ENCODE measurements at regions of chr4 and their contacts with region 1.

Region 1: GRCh38 chr4:95190751-95191436 is 357.9 kb downstream of the UNC5C start:
- DNase-seq: no peak
- H3K4me3 ChIP-seq: no peak overlapping the region
- H3K27ac ChIP-seq: no peak overlapping the region
- H3K4me1 ChIP-seq: peaks cover 7% of the 10 kb centered on the region
- H3K27me3 ChIP-seq: no peaks in the 10 kb centered on the region
- CTCF ChIP-seq: no peak
- EP300 ChIP-seq: no peak
- POLR2A ChIP-seq: no peak

Region 2: DNA sequence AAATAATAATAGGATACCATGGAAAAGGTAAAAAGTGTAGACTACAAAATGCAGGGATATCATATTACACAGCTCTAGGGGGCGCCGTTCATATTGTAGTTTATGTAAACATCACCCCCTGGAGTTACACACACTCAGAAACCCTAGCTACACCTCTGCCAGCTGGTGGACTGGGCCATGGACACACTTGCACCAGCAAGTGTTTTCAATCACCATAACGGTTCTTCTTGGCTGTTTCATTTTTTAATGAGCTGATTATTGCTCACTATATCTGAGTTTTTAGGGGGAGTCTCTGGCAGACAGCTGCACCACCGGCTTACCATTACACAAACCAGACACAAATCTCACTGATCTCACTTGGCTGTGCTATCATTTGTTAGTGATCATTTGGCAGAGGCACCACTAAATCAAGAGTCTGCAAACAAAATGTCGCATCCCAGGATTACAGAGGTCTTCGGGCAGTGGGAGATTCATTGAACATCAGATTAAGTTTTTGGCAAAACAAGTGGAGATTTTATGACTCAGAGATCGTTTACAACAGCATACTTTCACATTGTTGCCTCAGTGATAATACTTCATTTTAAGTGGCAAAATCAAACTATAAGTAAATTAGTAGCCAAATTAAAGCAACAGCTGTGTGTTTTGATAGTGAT is 172.1 kb after region 1 on chr4:
- intact Hi-C with region 1: loop called in 1 of 4 experiments (anchors 5 kb)
- DNase-seq: peak; percentile 20 to 56 (median 39)
- H3K4me3 ChIP-seq: no peak overlapping the region
- H3K27ac ChIP-seq: no peak overlapping the region
- H3K4me1 ChIP-seq: peaks cover 3% of the 10 kb centered on the region
- H3K27me3 ChIP-seq: no peaks in the 10 kb centered on the region
- CTCF ChIP-seq: peak in 1 of 3 donors; percentile 17
- EP300 ChIP-seq: no peak
- POLR2A ChIP-seq: no peak

Measured in ovary (tissue), 10 donors.